Naive thymus-derived CD4-positive, alpha-beta T cell (primary cell): ENCODE measurements at regions of chr16 and their contacts with region 1.

Region 1: GRCh38 chr16:48623304-48624016 is 13.5 kb upstream of the N4BP1 start:
- DNase-seq: peak; percentile 70 to 90 (median 82)
- ATAC-seq: peak; percentile 97
- H3K4me3 ChIP-seq: peak overlapping the region; percentile 34
- H3K4me3 Mint-ChIP-seq: peak overlapping the region; percentile 82 to 95 (median 86)
- H3K27ac ChIP-seq: peak overlapping the region; percentile 42
- H3K27ac Mint-ChIP-seq: peak overlapping the region; percentile 59 to 93 (median 79)
- H3K4me1 ChIP-seq: peaks cover 0 to 23% of the 10 kb centered on the region in 2 donors
- H3K4me1 Mint-ChIP-seq: peaks cover 14 to 39% (median 33%) of the 10 kb centered on the region in 7 donors
- H3K27me3 ChIP-seq: no peaks in the 10 kb centered on the region
- H3K27me3 Mint-ChIP-seq: peaks cover 0 to 7% (median 0%) of the 10 kb centered on the region in 5 donors

Region 2: GRCh38 chr16:48244080-48244862 is 379.2 kb before region 1 on chr16 and contains the start of gene LONP2:
- CTCF ChIA-PET with region 1: interaction called, 3 read pairs
- POLR2A ChIA-PET with region 1: no interaction called
- intact Hi-C with region 1: loop called in 1 of 2 experiments (anchors 1 kb)
- DNase-seq: peak; percentile 79 to 97 (median 93)
- ATAC-seq: peak; percentile 99
- H3K4me3 ChIP-seq: peak within 1 kb of the TSS; percentile 78
- H3K4me3 Mint-ChIP-seq: peak within 1 kb of the TSS; percentile 93 to 100 (median 96)
- H3K27ac ChIP-seq: peak within 1 kb of the TSS; percentile 78
- H3K27ac Mint-ChIP-seq: peak within 1 kb of the TSS; percentile 89 to 98 (median 96)
- H3K4me1 ChIP-seq: peaks cover 25 to 27% of the 10 kb centered on the region in 2 donors
- H3K4me1 Mint-ChIP-seq: peaks cover 29 to 56% (median 45%) of the 10 kb centered on the region in 7 donors
- H3K27me3 ChIP-seq: no peaks in the 10 kb centered on the region
- H3K27me3 Mint-ChIP-seq: no peaks in the 10 kb centered on the region
- total RNA-seq, gene LONP2: 62.3 to 124 (median 83.0) TPM

Region 3: GRCh38 chr16:48365581-48366164 is 257.8 kb before region 1 on chr16:
- CTCF ChIA-PET with region 1: interaction called, 89 read pairs
- POLR2A ChIA-PET with region 1: interaction called, 9 read pairs
- intact Hi-C with region 1: loop called in 1 of 2 experiments (anchors 1 kb)
- DNase-seq: peak; percentile 66 to 86 (median 73)
- ATAC-seq: peak; percentile 95
- H3K4me3 ChIP-seq: peak overlapping the region; percentile 88
- H3K4me3 Mint-ChIP-seq: peak overlapping the region; percentile 83 to 100 (median 94)
- H3K27ac ChIP-seq: peak overlapping the region; percentile 77
- H3K27ac Mint-ChIP-seq: peak overlapping the region; percentile 89 to 100 (median 98)
- H3K4me1 ChIP-seq: peaks cover 14 to 15% of the 10 kb centered on the region in 2 donors
- H3K4me1 Mint-ChIP-seq: peaks cover 24 to 71% (median 54%) of the 10 kb centered on the region in 7 donors
- H3K27me3 ChIP-seq: no peaks in the 10 kb centered on the region
- H3K27me3 Mint-ChIP-seq: no peaks in the 10 kb centered on the region

Region 4: DNA sequence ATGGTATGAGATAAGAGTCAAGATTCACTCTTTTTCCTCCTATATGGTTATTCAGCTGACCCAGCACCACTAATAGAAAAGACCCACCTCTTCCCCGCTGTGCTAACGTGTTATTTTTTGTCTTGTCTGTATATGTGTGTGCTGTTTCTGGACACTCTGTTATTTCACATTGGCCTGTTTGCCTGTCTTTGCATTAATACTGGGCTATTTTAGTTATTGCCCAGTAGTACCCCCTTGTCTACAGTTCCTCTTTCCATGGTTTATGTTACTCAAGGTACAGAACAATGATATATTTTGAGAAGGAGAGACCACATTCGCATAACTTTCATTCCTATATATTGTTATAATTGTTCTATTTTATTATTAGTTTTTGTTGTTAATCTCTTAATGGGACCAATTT is 164.3 kb before region 1 on chr16:
- CTCF ChIA-PET with region 1: interaction called, 4 read pairs
- POLR2A ChIA-PET with region 1: no interaction called
- intact Hi-C with region 1: loop called in 1 of 2 experiments (anchors 5 kb)
- DNase-seq: no peak
- ATAC-seq: no peak
- H3K4me3 ChIP-seq: no peak overlapping the region
- H3K4me3 Mint-ChIP-seq: no peak overlapping the region
- H3K27ac ChIP-seq: no peak overlapping the region
- H3K27ac Mint-ChIP-seq: no peak overlapping the region
- H3K4me1 ChIP-seq: peaks cover 0 to 5% of the 10 kb centered on the region in 2 donors
- H3K4me1 Mint-ChIP-seq: peaks cover 0 to 6% (median 0%) of the 10 kb centered on the region in 7 donors
- H3K27me3 ChIP-seq: no peaks in the 10 kb centered on the region
- H3K27me3 Mint-ChIP-seq: peaks cover 0 to 16% (median 0%) of the 10 kb centered on the region in 5 donors

Region 5: DNA sequence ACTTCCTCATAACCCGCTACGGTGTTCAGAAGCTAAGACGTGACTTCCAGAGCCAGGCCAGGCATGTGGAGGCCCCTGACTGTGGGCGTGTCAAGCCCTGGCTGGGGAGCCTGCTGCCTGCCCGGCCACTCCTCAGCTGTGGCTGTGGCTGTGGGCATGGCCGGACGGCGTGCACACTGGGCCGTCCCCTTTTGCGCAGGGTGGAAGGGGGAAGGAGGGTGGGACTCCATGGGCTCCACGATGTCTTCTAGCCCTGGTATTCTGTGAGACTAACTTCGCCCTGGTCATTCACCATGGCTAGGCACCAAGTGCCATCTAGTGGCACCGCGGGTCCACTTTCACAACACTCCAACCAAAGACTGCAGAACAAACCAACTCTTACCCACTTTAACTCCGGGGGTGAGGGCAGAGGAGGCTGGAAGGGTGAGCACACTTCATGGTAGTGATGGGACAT is 81.4 kb before region 1 on chr16:
- CTCF ChIA-PET with region 1: interaction called, 12 read pairs
- POLR2A ChIA-PET with region 1: interaction called, 3 read pairs
- intact Hi-C with region 1: loop called (anchors 1 kb)
- DNase-seq: peak in 4 of 9 donors; percentile 12 to 27 (median 24)
- ATAC-seq: peak; percentile 67
- H3K4me3 ChIP-seq: no peak overlapping the region
- H3K4me3 Mint-ChIP-seq: no peak overlapping the region
- H3K27ac ChIP-seq: no peak overlapping the region
- H3K27ac Mint-ChIP-seq: peak overlapping the region in 4 of 9 donors; percentile 7 to 69 (median 48)
- H3K4me1 ChIP-seq: peaks cover under 1 to 8% of the 10 kb centered on the region in 2 donors
- H3K4me1 Mint-ChIP-seq: peaks cover 8 to 17% (median 14%) of the 10 kb centered on the region in 7 donors
- H3K27me3 ChIP-seq: no peaks in the 10 kb centered on the region
- H3K27me3 Mint-ChIP-seq: no peaks in the 10 kb centered on the region

Region 6: DNA sequence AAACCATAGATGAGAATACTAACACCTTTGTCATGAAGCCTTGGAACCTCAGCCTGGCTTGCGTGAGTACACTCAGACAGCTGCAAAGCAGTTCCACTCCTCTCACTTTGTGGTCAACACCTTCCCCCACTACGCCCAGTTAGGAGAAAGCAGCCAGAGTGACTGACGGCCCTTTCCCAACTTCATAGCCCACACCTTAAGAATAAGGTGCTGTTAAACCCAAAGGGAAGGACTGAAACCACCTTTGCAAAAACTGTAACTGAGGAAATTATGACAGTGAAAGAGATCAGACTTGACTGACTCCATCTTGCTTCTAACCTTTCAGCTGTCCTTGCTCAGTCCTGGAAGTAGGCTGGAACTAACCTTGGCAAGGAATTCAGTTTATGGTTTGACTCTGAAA is 27.1 kb before region 1 on chr16:
- CTCF ChIA-PET with region 1: interaction called, 15 read pairs
- POLR2A ChIA-PET with region 1: no interaction called
- intact Hi-C with region 1: no loop called
- DNase-seq: peak in 1 of 9 donors; percentile 61
- ATAC-seq: peak; percentile 56
- H3K4me3 ChIP-seq: no peak overlapping the region
- H3K4me3 Mint-ChIP-seq: peak overlapping the region in 5 of 10 donors; percentile 16 to 47 (median 40)
- H3K27ac ChIP-seq: no peak overlapping the region
- H3K27ac Mint-ChIP-seq: peak overlapping the region in 5 of 9 donors; percentile 7 to 80 (median 72)
- H3K4me1 ChIP-seq: peaks cover 22 to 35% of the 10 kb centered on the region in 2 donors
- H3K4me1 Mint-ChIP-seq: peaks cover 36 to 74% (median 59%) of the 10 kb centered on the region in 7 donors
- H3K27me3 ChIP-seq: no peaks in the 10 kb centered on the region
- H3K27me3 Mint-ChIP-seq: no peaks in the 10 kb centered on the region

Region 7: GRCh38 chr16:48810436-48810802 is 187.0 kb after region 1 on chr16:
- CTCF ChIA-PET with region 1: no interaction called
- POLR2A ChIA-PET with region 1: no interaction called
- intact Hi-C with region 1: no loop called
- DNase-seq: no peak
- ATAC-seq: no peak
- H3K4me3 ChIP-seq: no peak overlapping the region
- H3K4me3 Mint-ChIP-seq: no peak overlapping the region
- H3K27ac ChIP-seq: no peak overlapping the region
- H3K27ac Mint-ChIP-seq: no peak overlapping the region
- H3K4me1 ChIP-seq: no peaks in the 10 kb centered on the region
- H3K4me1 Mint-ChIP-seq: peaks cover 0 to 4% (median 0%) of the 10 kb centered on the region in 7 donors
- H3K27me3 ChIP-seq: peaks cover 0 to 8% of the 10 kb centered on the region in 2 donors
- H3K27me3 Mint-ChIP-seq: peaks cover 32 to 58% (median 44%) of the 10 kb centered on the region in 5 donors